ENCODE measurements at regions of chr12 and their contacts with region 1.

Region 1: DNA sequence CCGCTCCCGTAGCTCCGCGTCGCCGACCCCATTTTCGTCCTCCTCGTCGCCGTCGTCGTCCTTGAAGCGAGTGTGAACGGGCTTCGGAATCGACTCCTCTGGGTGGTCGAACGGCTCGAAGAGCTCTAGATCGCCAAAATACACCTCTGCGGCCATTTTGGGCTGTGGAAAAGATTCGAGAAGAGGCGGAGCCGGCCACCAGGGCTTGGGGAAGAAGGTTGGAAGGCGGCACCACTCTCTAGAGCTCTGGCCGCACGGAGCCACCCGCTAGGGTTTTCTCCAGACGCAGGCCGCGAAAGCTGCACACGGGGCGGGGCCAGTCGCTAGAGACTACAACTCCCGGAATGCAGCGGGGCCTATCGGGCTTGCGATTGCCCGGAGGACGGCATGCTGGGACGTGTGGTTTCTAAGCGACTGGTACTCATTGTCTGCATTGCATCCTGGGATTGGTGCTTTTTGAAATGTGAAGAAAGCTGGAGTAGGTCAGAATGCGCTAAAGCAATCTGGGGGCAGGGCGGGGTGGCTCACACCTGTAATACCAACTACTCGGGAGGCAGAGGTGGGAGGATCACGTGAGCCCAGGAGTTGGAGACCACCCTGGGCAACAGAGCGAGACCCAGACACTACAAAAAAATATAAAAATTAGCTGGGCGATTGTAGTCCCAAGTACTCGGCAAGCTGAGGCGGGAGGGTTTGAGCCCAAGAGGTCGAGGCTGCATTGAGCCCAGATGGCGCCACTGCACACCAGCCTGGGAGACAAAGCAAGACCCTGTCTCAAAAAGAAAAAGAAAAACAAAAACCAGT is at the start of gene ZCCHC8:
- DNase-seq: peak; percentile 92 to 96 (median 94)
- H3K4me3 ChIP-seq: peak within 1 kb of the TSS; percentile 97
- H3K4me3 Mint-ChIP-seq: peak within 1 kb of the TSS; percentile 81 to 98 (median 96)
- H3K27ac ChIP-seq: peak within 1 kb of the TSS; percentile 93
- H3K27ac Mint-ChIP-seq: peak within 1 kb of the TSS; percentile 79 to 99 (median 97)
- H3K4me1 ChIP-seq: peaks cover 25% of the 10 kb centered on the region
- H3K4me1 Mint-ChIP-seq: peaks cover 39 to 48% (median 47%) of the 10 kb centered on the region in 3 donors
- H3K27me3 ChIP-seq: no peaks in the 10 kb centered on the region
- H3K27me3 Mint-ChIP-seq: no peaks in the 10 kb centered on the region
- total RNA-seq, gene ZCCHC8: 32.1 to 33.7 TPM

Region 2: DNA sequence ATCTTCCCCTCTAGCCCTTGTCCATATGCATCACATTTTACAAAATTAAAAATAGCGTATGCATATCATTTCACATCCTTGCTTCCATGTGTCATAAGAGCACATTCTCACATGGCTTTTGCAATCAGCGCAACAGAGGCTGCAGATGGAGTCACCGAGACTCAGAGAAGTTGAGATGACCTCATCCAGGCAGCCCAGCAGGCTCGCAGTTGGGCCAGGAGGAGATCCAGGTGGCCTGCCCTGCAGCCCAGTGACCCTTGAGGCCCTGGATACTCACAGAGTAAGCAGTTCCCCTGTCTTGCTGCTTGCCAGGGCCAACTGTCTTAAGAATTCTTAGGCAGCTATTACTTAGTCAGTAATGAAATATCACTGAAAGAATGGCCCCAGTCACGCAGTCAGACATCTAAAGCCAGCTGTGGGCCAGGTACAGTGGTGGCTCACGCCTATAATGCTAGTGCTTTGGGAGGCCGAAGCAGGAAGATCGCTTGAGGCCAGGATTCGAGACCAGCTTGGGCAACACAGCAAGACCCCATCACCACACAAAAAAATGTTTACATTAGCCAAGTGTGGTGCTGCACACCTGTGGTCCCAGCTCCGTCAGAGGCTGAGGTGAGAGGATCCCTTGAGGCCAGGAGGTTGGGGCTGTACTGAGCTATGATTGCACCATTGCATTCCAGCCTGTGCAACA is 1213.5 kb before region 1 on chr12:
- CTCF ChIA-PET with region 1: no interaction called
- POLR2A ChIA-PET with region 1: no interaction called
- DNase-seq: no peak
- H3K4me3 ChIP-seq: no peak overlapping the region
- H3K4me3 Mint-ChIP-seq: no peak overlapping the region
- H3K27ac ChIP-seq: no peak overlapping the region
- H3K27ac Mint-ChIP-seq: no peak overlapping the region
- H3K4me1 ChIP-seq: no peaks in the 10 kb centered on the region
- H3K4me1 Mint-ChIP-seq: peaks cover 6 to 9% (median 8%) of the 10 kb centered on the region in 3 donors
- H3K27me3 ChIP-seq: no peaks in the 10 kb centered on the region
- H3K27me3 Mint-ChIP-seq: no peaks in the 10 kb centered on the region

Region 3: GRCh38 chr12:122421821-122422729 is 78.8 kb before region 1 on chr12 and contains the start of gene CLIP1:
- CTCF ChIA-PET with region 1: no interaction called
- POLR2A ChIA-PET with region 1: interaction called, 12 read pairs
- DNase-seq: peak; percentile 46 to 72 (median 56)
- H3K4me3 ChIP-seq: peak within 1 kb of the TSS; percentile 80
- H3K4me3 Mint-ChIP-seq: peak within 1 kb of the TSS; percentile 87 to 97 (median 93)
- H3K27ac ChIP-seq: peak within 1 kb of the TSS; percentile 76
- H3K27ac Mint-ChIP-seq: peak within 1 kb of the TSS; percentile 84 to 98 (median 89)
- H3K4me1 ChIP-seq: peaks cover 27% of the 10 kb centered on the region
- H3K4me1 Mint-ChIP-seq: peaks cover 26 to 45% (median 37%) of the 10 kb centered on the region in 3 donors
- H3K27me3 ChIP-seq: no peaks in the 10 kb centered on the region
- H3K27me3 Mint-ChIP-seq: peaks cover 0 to 3% of the 10 kb centered on the region in 2 donors
- total RNA-seq, gene CLIP1: 43.9 to 48.2 TPM

Region 4: DNA sequence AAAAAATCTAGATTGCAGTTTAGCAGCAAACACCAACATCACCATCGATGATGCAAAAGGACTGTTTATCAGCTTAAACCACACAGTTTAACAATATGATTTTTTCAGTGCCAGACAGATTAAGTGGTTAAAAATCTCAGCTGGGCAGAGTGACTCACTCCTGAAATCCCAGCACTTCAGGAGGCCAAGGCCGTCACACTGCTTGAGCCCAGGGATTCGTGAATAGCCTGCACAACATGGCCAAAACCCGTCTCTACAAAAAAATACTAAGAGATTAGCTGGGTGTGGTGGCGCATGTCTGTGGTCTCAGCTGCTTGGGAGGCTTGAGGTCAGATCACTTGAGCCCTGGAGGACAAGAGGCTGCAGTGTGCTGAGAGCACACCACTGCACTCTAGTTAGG is 17.0 kb after region 1 on chr12:
- CTCF ChIA-PET with region 1: interaction called, 3 read pairs
- POLR2A ChIA-PET with region 1: interaction called, 12 read pairs
- DNase-seq: no peak
- H3K4me3 ChIP-seq: no peak overlapping the region
- H3K4me3 Mint-ChIP-seq: no peak overlapping the region
- H3K27ac ChIP-seq: no peak overlapping the region
- H3K27ac Mint-ChIP-seq: peak overlapping the region in 3 of 8 donors; percentile 23 to 61 (median 35)
- H3K4me1 ChIP-seq: peaks cover 12% of the 10 kb centered on the region
- H3K4me1 Mint-ChIP-seq: peaks cover 23 to 56% (median 55%) of the 10 kb centered on the region in 3 donors
- H3K27me3 ChIP-seq: no peaks in the 10 kb centered on the region
- H3K27me3 Mint-ChIP-seq: no peaks in the 10 kb centered on the region

Region 5: DNA sequence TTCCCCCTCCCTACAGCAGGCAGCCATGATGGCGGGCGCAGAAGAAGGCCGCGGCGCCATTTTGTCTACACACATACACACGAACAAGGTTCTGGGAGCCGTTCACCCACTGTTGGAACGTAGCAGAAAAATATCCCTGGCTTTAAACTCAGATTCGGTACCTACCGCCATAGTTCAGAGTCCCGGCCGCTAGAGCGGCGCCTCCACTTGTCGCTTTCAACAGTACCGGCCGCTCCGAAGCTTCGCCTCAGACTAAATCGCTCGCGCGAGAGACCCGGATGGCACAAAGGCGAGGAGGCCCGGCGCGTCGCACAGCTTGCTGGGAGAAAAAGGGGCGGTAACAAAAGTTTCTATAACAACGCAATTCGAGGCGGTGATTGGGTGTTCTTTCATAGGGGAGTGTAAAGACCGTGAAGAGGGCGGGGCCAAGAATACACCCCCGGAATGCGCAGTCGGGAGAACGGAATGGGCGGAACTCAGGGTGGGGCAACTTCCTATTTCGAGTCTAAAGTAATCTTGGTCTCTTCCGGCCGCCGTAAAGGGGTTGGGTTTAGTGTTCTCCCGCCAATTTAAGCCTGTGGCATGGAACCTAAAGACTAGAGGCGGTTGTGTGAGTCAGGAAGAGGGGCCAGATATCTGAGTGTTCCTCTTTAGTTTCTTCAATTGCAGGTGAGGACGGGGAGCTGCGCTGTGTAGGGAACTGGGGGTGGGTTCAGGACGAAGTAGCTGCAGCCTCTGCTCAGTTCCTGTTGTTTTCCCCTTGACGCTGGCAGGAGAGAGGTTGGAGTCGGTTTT is 26.0 kb after region 1 on chr12 and contains the starts of genes KNTC1 and RSRC2:
- CTCF ChIA-PET with region 1: interaction called, 5 read pairs
- POLR2A ChIA-PET with region 1: interaction called, 65 read pairs
- DNase-seq: peak; percentile 95 to 99 (median 99)
- H3K4me3 ChIP-seq: peak within 1 kb of the TSS; percentile 90
- H3K4me3 Mint-ChIP-seq: no peak within 1 kb of the TSS
- H3K27ac ChIP-seq: peak within 1 kb of the TSS; percentile 98
- H3K27ac Mint-ChIP-seq: no peak within 1 kb of the TSS
- H3K4me1 ChIP-seq: peaks cover 49% of the 10 kb centered on the region
- H3K4me1 Mint-ChIP-seq: peaks cover 32 to 36% (median 36%) of the 10 kb centered on the region in 3 donors
- H3K27me3 ChIP-seq: no peaks in the 10 kb centered on the region
- H3K27me3 Mint-ChIP-seq: no peaks in the 10 kb centered on the region
- total RNA-seq, gene KNTC1: 66.0 to 69.6 TPM
- total RNA-seq, gene RSRC2: 84.3 to 87.1 TPM